WTC11 (cell line): ENCODE measurements at regions of chr11 and their contacts with region 1.

Region 1: DNA sequence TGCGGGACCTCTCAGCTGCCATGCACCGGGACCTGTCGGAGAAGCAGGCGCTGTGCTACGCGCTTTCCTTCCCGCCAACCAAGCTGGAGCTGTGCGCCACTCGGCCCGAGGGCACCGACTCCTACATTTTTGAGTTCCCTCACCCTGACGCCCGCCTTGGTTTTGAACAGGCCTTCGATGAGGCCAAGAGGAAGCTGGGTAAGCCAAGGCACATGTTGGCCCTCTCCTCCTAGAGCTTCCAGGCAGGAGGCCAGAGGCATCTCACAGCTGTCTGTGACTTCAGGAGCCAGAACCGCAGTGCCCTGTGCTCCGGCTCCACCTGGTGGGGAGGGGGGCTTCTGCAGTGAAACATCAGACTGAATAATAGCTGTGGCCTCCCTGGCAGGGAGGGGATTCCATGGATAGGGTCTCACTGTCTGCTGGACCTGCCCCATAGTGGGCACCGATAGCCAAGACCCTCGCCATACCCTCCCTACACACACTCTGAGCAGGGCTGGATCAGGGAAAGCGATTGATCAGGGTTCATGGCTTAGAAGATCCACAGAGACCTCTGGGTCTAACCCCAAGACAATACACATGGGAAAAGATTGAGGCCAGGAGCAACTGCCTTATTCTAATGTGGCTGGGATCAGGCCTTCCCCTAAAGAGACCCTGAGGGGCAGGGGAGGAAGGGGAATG is 15.7 kb upstream of the RELT start:
- DNase-seq: peak; percentile 81
- ATAC-seq: peak; percentile 23
- H3K4me3 Mint-ChIP-seq: no peak overlapping the region; the same call in 1 of the 2 replicates
- H3K27ac Mint-ChIP-seq: no peak overlapping the region; the same call in 1 of the 2 replicates
- H3K4me1 Mint-ChIP-seq: peaks cover 8% of the 10 kb centered on the region
- H3K27me3 Mint-ChIP-seq: peaks cover 7% of the 10 kb centered on the region
- CTCF ChIP-seq: no peak

Region 2: DNA sequence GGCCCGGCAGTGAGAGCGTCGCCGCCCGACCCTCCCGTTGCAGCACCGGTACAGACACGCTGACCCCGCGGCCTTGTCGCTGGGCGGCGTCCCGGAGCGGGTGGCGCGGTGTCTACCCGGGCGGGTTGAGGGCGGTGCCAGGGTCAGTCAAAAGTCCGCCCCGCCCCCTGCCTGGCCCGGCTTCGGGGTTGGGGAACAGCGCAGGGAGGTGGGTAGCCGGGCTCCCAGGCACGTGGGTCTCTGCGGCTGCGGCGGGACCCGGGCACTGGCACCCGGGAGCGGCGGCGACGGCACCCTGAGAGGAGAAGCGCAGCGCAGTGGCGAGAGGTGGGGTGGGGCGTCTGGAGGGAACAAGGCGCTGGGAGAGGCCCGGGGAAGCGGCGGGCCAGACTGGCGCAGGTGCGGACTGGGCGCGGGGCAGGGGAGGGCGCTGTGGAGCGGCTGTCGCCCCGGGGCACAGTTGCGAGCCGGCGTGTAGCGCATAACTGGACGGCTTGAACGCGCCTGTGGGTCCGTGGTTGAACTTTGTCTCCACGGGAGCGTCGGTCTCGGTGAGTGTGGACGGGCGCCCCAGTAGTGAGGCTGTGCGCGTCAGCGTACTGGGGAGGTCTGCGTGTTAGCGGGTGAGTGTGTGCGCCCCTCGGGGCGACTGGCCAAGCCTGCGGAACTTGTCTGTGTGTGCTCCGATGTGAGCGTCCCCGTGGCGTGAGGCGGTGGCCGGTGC is 142.2 kb before region 1 on chr11 and contains the start of gene P2RY2:
- CTCF ChIA-PET with region 1: no interaction called
- POLR2A ChIA-PET with region 1: no interaction called
- DNase-seq: peak; percentile 80
- ATAC-seq: peak; percentile 88
- H3K4me3 Mint-ChIP-seq: peak within 1 kb of the TSS; percentile 78
- H3K27ac Mint-ChIP-seq: no peak within 1 kb of the TSS
- H3K4me1 Mint-ChIP-seq: peaks cover 8% of the 10 kb centered on the region
- H3K27me3 Mint-ChIP-seq: peaks cover 58% of the 10 kb centered on the region
- CTCF ChIP-seq: no peak
- total RNA-seq, gene P2RY2: 0.94 to 1.2 TPM (median 1.2 TPM) in 3 replicates

Region 3: GRCh38 chr11:73288873-73289707 is 71.4 kb before region 1 on chr11:
- CTCF ChIA-PET with region 1: interaction called, 14 read pairs
- POLR2A ChIA-PET with region 1: no interaction called
- DNase-seq: peak; percentile 85
- ATAC-seq: peak; percentile 85
- H3K4me3 Mint-ChIP-seq: no peak overlapping the region
- H3K27ac Mint-ChIP-seq: no peak overlapping the region
- H3K4me1 Mint-ChIP-seq: peaks cover 9% of the 10 kb centered on the region
- H3K27me3 Mint-ChIP-seq: peaks cover 9% of the 10 kb centered on the region
- CTCF ChIP-seq: peak; percentile 81

Region 4: GRCh38 chr11:73307323-73308002 is 53.0 kb before region 1 on chr11:
- CTCF ChIA-PET with region 1: interaction called, 124 read pairs
- POLR2A ChIA-PET with region 1: interaction called, 4 read pairs
- DNase-seq: peak; percentile 99
- ATAC-seq: peak; percentile 78
- H3K4me3 Mint-ChIP-seq: peak overlapping the region; percentile 76
- H3K27ac Mint-ChIP-seq: peak overlapping the region; percentile 85
- H3K4me1 Mint-ChIP-seq: peaks cover 16% of the 10 kb centered on the region
- H3K27me3 Mint-ChIP-seq: peaks cover 39% of the 10 kb centered on the region
- CTCF ChIP-seq: peak; percentile 57

Region 5: DNA sequence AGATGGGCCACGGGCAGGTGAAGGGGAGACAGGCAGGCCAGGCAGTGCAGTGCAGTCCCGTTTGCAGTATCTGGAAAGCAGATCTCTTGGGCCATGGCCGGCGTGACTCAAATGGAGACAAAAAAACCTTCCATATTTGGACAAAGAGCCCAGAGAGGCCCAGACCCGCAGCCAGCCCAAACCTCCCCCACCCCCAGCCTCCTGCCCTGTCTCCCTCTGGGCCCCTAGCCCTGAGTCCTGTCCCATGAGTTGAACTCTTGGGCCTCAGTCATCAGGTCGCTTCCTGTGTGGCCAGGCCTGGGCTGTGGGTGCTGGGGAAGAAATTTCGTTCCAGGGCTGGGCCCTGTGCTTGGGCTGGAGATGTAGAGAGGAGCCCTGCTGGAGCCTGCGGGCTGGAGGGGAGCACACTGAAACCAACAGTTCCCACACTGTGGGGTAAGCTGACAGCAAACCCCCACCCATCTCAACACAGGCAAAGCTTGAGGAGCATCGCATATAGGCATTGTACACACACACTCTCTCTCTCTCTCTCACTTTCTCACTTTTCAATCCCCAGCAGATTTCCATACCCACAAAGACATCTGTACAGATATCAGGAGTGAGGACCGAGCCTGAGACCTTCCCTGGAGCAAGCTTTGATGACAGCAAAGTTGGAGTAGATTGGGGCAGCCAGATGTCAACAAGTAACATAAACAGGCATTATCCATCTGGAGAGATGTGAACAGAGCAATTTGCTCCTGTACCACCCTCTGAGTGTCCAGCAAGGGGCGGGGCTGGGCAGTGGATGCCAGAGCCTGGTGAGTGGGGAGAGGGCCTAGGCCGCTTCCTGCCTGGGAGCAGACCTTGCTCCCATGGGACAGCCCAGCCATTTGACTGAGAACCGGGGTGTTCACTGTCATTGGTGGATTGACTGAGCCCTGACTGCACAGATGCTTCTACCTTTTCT is 35.2 kb before region 1 on chr11:
- CTCF ChIA-PET with region 1: interaction called, 17 read pairs
- POLR2A ChIA-PET with region 1: interaction called, 3 read pairs
- DNase-seq: no peak
- ATAC-seq: no peak
- H3K4me3 Mint-ChIP-seq: no peak overlapping the region
- H3K27ac Mint-ChIP-seq: no peak overlapping the region
- H3K4me1 Mint-ChIP-seq: peaks cover 44% of the 10 kb centered on the region
- H3K27me3 Mint-ChIP-seq: peaks cover 24% of the 10 kb centered on the region
- CTCF ChIP-seq: no peak

Region 6: DNA sequence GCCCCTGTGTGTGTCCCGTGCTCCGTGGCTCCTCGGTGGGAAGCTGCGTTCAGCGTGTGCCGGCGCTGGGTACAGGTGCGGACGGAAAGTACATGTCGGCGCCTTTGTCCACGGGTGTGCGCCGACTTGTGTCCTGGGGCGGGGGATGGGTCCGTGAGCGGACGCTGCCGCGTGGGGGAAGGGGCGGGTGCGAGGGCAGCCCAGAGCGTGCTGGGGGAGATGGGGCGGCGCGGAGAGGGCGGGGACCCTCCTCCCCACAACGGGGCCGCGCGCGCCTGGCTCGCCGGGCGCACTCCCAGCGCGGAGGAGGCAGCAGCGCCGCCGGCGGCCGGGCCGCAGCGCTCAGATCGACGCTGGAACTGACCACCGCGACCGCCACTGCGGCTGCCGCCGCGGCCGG is 17.8 kb before region 1 on chr11:
- CTCF ChIA-PET with region 1: interaction called, 21 read pairs
- POLR2A ChIA-PET with region 1: interaction called, 3 read pairs
- DNase-seq: peak; percentile 53
- ATAC-seq: peak; percentile 63
- H3K4me3 Mint-ChIP-seq: peak overlapping the region; percentile 69
- H3K27ac Mint-ChIP-seq: no peak overlapping the region
- H3K4me1 Mint-ChIP-seq: peaks cover 18% of the 10 kb centered on the region
- H3K27me3 Mint-ChIP-seq: peaks cover 33% of the 10 kb centered on the region
- CTCF ChIP-seq: no peak

Region 7: GRCh38 chr11:73384872-73385689 is 24.6 kb after region 1 on chr11:
- CTCF ChIA-PET with region 1: interaction called, 16 read pairs
- POLR2A ChIA-PET with region 1: no interaction called
- DNase-seq: no peak
- ATAC-seq: no peak
- H3K4me3 Mint-ChIP-seq: no peak overlapping the region
- H3K27ac Mint-ChIP-seq: peak overlapping the region; percentile 32; the same call in 1 of the 2 replicates
- H3K4me1 Mint-ChIP-seq: peaks cover 11% of the 10 kb centered on the region
- H3K27me3 Mint-ChIP-seq: no peaks in the 10 kb centered on the region
- CTCF ChIP-seq: no peak

Region 8: GRCh38 chr11:73404048-73404447 is 43.6 kb after region 1 on chr11:
- CTCF ChIA-PET with region 1: interaction called, 15 read pairs
- POLR2A ChIA-PET with region 1: no interaction called
- DNase-seq: peak; percentile 66
- ATAC-seq: peak; percentile 91
- H3K4me3 Mint-ChIP-seq: no peak overlapping the region
- H3K27ac Mint-ChIP-seq: no peak overlapping the region
- H3K4me1 Mint-ChIP-seq: peaks cover 6% of the 10 kb centered on the region
- H3K27me3 Mint-ChIP-seq: no peaks in the 10 kb centered on the region
- CTCF ChIP-seq: no peak